ENCODE measurements at regions of chrX and their contacts with region 1.

Region 1: DNA sequence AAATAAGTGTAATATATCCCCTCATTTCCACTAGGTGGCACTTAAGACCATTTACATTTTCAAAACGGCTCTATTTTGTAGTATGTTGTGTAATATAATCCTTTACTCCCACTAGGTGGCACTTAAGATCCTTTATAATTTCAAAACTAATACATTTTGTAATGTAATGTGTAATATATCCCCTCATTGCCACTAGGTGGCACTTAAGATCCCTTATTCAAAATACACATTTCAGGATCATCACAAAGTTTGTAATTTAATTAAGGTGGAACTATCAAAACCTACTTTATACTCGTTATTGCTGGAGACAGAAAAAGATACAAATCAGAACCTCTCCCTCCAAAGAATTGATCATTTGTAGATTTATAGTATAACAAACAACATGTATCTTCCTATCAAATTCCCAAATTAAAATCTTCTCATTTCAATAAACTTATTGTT is 132.5 kb downstream of the ARHGAP6 start:
- DNase-seq: no peak
- ATAC-seq: peak; percentile 82

Region 2: DNA sequence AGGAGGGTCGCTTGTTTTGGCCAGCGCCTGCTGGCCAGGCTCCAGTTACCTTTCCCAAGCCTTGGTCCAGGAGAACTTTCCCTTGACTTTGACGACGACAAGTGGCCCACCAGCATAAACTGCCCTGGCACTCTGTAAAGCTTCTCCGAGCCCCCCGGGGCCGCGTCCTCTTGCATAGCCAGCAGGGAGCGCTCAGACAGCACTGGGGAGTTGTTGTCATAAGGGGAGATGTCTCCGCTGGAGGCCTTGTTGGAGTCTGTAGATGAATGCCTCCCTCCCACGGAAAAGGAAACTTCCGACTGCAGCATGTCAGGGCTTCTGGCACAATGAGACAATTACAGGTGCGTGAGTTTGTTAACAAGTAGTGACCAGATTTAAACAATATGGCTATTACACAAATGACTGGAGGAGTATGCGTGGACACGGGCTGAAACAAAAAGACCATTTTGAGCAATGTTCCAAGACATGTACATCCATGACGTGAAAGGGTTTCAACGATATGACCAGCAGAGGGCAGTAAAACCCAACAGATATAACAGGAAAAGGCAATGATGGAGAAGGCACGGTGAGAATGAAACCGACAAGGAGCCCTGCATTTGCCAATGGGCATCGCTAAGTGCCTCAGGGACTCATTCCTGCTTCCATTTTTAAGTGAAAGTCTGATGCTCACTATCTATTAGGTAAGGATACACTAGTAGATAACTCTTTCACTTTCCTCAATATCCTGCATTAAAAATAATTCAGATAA is 389.1 kb before region 1 on chrX:
- intact Hi-C with region 1: loop called (anchors 5 kb)
- DNase-seq: no peak
- ATAC-seq: no peak

Region 3: GRCh38 chrX:11470250-11470974 is 62.8 kb before region 1 on chrX:
- intact Hi-C with region 1: no loop called
- DNase-seq: no peak
- ATAC-seq: no peak

Region 4: GRCh38 chrX:11678158-11678557 is 144.9 kb after region 1 on chrX:
- intact Hi-C with region 1: no loop called
- DNase-seq: no peak
- ATAC-seq: no peak

Region 5: DNA sequence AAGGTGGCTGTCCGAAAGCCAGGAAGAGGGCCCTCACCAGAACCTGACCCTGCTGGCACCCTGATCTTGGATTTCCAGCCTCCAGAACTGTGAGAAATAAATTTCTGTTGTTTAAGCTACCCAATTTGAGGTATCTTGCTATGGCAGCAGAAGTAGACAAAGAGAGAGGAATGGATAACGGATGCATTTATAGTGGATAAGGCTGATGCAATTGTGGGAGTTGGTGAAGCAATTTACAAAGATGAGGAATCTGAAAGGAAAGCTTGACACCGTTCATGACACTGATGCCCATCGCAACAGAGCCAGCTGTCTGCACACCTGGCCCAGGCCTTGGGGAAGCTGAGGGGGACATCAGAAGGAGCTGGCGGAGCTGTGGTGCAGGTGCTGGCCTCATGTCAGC is 189.1 kb after region 1 on chrX:
- intact Hi-C with region 1: loop called (anchors 2 kb)
- DNase-seq: no peak
- ATAC-seq: no peak

Region 6: GRCh38 chrX:11770320-11770719 is 237.1 kb after region 1 on chrX:
- intact Hi-C with region 1: loop called (anchors 2 kb)
- DNase-seq: no peak
- ATAC-seq: peak; percentile 60

Measured in Right ventricle myocardium inferior (tissue), 1 donor.